GM12878 (cell line): ENCODE measurements at regions of chr5 and their contacts with region 1.

Region 1: GRCh38 chr5:61331407-61332357 is at the start of gene ZSWIM6:
- DNase-seq: peak; percentile 62
- ATAC-seq: peak; percentile 72
- H3K4me3 ChIP-seq: peak within 1 kb of the TSS; percentile 76
- H3K27ac ChIP-seq: no peak within 1 kb of the TSS
- H3K4me1 ChIP-seq: peaks cover 18% of the 10 kb centered on the region
- H3K27me3 ChIP-seq: peaks cover 0 to 17% of the 10 kb centered on the region in 2 experiments; a peak in 2 of 4 replicates
- CTCF ChIP-seq: no peak
- EP300 ChIP-seq: no peak
- POLR2A ChIP-seq: peak; percentile 94
- RAD21 ChIP-seq: no peak; the same call in 1 of the 2 replicates
- polyA plus RNA-seq, gene ZSWIM6: 1.5 to 2.1 TPM

Region 2: DNA sequence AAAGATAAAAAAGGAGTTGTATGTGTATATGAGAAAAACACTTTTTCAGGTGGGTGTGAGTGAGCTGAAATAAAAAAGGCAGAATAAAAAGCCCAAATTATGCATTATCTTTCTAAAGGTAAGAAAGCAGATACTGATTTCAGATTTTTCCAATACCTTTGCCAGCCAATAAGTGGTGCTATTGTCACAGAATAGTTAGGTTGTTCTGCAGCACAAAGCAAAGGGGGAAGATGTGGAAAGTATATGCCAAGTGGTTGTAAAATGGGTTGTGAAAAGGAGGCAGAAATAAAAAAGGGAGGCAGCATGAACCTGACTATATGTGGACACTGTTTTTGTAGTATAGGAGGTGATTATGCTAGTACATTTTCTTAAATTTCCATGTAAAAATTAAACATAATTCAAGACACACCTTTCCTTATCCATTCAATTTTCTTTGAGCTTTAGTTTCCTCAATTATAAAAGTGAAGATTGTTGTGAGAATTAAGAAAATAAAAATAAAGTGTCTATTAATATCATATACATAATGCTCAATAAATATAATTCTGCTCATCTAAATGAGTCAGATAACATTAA is 276.2 kb before region 1 on chr5:
- CTCF ChIA-PET with region 1: interaction called, 3 read pairs
- POLR2A ChIA-PET with region 1: interaction called, 3 read pairs
- RAD21 ChIA-PET with region 1: no interaction called
- SMC1A ChIA-PET with region 1: interaction called, 5 read pairs
- in situ Hi-C with region 1: no loop called
- intact Hi-C with region 1: loop called (anchors 2 kb)
- DNase-seq: peak; percentile 15
- ATAC-seq: peak; percentile 80
- H3K4me3 ChIP-seq: no peak overlapping the region
- H3K27ac ChIP-seq: no peak overlapping the region
- H3K4me1 ChIP-seq: peaks cover 3% of the 10 kb centered on the region; the same call in 1 of the 2 replicates
- H3K27me3 ChIP-seq: no peaks in the 10 kb centered on the region
- CTCF ChIP-seq: peak; percentile 57 to 80 (median 63); a peak in 5 of 6 replicates
- EP300 ChIP-seq: no peak
- POLR2A ChIP-seq: no peak
- RAD21 ChIP-seq: peak; percentile 96

Region 3: DNA sequence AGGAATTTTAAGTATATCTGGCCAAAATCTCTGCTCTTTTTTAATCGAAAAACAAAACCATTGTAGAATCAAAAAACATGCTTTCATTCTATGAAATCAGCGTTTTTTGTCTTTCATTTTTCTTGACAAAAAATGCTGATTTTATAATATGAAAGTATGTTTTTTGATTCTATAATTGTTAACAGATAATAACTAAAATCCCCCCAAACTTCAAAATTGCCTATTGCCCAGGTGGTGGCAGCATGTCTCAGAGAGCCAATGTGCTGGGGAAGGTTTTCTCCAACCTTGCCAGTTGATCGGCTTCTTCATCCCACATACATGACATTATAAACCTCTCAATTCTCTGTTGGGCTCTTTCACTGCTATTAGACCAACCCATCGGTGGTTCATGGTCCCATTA is 164.3 kb before region 1 on chr5:
- CTCF ChIA-PET with region 1: interaction called, 13 read pairs
- POLR2A ChIA-PET with region 1: interaction called, 5 read pairs
- RAD21 ChIA-PET with region 1: no interaction called
- SMC1A ChIA-PET with region 1: interaction called, 16 read pairs
- in situ Hi-C with region 1: loop called (anchors 10 kb)
- intact Hi-C with region 1: loop called (anchors 2 kb)
- DNase-seq: no peak
- ATAC-seq: peak; percentile 33
- H3K4me3 ChIP-seq: no peak overlapping the region
- H3K27ac ChIP-seq: no peak overlapping the region
- H3K4me1 ChIP-seq: no peaks in the 10 kb centered on the region; the same call in 1 of the 2 replicates
- H3K27me3 ChIP-seq: no peaks in the 10 kb centered on the region
- CTCF ChIP-seq: peak; percentile 31 to 73 (median 37); a peak in 5 of 6 replicates
- EP300 ChIP-seq: no peak
- POLR2A ChIP-seq: no peak
- RAD21 ChIP-seq: peak; percentile 84

Region 4: GRCh38 chr5:61304611-61305321 is 26.9 kb before region 1 on chr5:
- CTCF ChIA-PET with region 1: no interaction called
- POLR2A ChIA-PET with region 1: interaction called, 3 read pairs
- RAD21 ChIA-PET with region 1: interaction called, 10 read pairs
- SMC1A ChIA-PET with region 1: interaction called, 3 read pairs
- in situ Hi-C with region 1: no loop called
- intact Hi-C with region 1: no loop called
- DNase-seq: no peak
- ATAC-seq: peak; percentile 37; the same call in 2 of the 3 replicates
- H3K4me3 ChIP-seq: no peak overlapping the region
- H3K27ac ChIP-seq: no peak overlapping the region
- H3K4me1 ChIP-seq: peaks cover 15% of the 10 kb centered on the region
- H3K27me3 ChIP-seq: no peaks in the 10 kb centered on the region
- CTCF ChIP-seq: no peak
- EP300 ChIP-seq: no peak
- POLR2A ChIP-seq: no peak
- RAD21 ChIP-seq: no peak

Region 5: GRCh38 chr5:61357745-61358144 is 26.1 kb after region 1 on chr5:
- CTCF ChIA-PET with region 1: interaction called, 4 read pairs
- POLR2A ChIA-PET with region 1: interaction called, 5 read pairs
- RAD21 ChIA-PET with region 1: interaction called, 3 read pairs
- SMC1A ChIA-PET with region 1: interaction called, 18 read pairs
- in situ Hi-C with region 1: no loop called
- intact Hi-C with region 1: no loop called
- DNase-seq: no peak
- ATAC-seq: no peak
- H3K4me3 ChIP-seq: no peak overlapping the region
- H3K27ac ChIP-seq: no peak overlapping the region
- H3K4me1 ChIP-seq: no peaks in the 10 kb centered on the region
- H3K27me3 ChIP-seq: no peaks in the 10 kb centered on the region
- CTCF ChIP-seq: peak; percentile 27 to 40 (median 27); a peak in 5 of 6 replicates
- EP300 ChIP-seq: no peak
- POLR2A ChIP-seq: no peak
- RAD21 ChIP-seq: peak; percentile 50

Region 6: GRCh38 chr5:61534481-61535267 is 203.0 kb after region 1 on chr5:
- CTCF ChIA-PET with region 1: interaction called, 3 read pairs
- POLR2A ChIA-PET with region 1: no interaction called
- RAD21 ChIA-PET with region 1: interaction called, 5 read pairs
- SMC1A ChIA-PET with region 1: interaction called, 3 read pairs
- in situ Hi-C with region 1: no loop called
- intact Hi-C with region 1: loop called (anchors 5 kb)
- DNase-seq: peak; percentile 64
- ATAC-seq: peak; percentile 91
- H3K4me3 ChIP-seq: no peak overlapping the region
- H3K27ac ChIP-seq: no peak overlapping the region
- H3K4me1 ChIP-seq: peaks cover 9% of the 10 kb centered on the region
- H3K27me3 ChIP-seq: no peaks in the 10 kb centered on the region
- CTCF ChIP-seq: no peak
- EP300 ChIP-seq: peak in 1 of 2 experiments; percentile 37; a peak in 2 of 4 replicates
- POLR2A ChIP-seq: no peak
- RAD21 ChIP-seq: no peak